AG04450 (cell line): ENCODE measurements at regions of chr5 and their contacts with region 1.

Region 1: DNA sequence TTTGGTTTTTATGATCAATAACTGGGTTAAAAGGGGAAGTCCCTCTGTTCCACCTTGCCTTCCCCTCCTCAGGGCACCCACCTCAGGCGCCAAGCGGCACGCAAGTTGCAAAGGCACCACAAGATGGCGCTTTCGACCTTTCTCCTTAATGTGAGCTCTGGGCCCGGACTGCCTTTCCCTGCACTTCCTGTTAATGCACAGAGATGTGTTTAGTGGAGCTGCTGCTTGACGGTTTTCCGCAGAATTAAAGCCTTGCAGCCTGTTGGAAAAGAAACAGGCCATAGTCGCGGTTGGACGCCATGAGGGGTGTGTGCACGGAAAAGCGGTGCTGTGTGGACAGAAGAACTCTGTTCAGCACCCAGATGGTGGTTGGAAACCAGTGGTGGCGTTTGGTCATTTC is 17.9 kb downstream of the CXCL14 start:
- DNase-seq: peak; percentile 42
- H3K4me3 ChIP-seq: no peak overlapping the region
- H3K27ac ChIP-seq: no peak overlapping the region
- H3K27me3 ChIP-seq: peaks cover 28% of the 10 kb centered on the region
- CTCF ChIP-seq: peak; percentile 89

Region 2: GRCh38 chr5:135116160-135116561 is 444.7 kb before region 1 on chr5:
- CTCF ChIA-PET with region 1: no interaction called
- POLR2A ChIA-PET with region 1: no interaction called
- DNase-seq: no peak
- H3K4me3 ChIP-seq: no peak overlapping the region
- H3K27ac ChIP-seq: no peak overlapping the region
- H3K27me3 ChIP-seq: peaks cover 14% of the 10 kb centered on the region
- CTCF ChIP-seq: no peak

Region 3: DNA sequence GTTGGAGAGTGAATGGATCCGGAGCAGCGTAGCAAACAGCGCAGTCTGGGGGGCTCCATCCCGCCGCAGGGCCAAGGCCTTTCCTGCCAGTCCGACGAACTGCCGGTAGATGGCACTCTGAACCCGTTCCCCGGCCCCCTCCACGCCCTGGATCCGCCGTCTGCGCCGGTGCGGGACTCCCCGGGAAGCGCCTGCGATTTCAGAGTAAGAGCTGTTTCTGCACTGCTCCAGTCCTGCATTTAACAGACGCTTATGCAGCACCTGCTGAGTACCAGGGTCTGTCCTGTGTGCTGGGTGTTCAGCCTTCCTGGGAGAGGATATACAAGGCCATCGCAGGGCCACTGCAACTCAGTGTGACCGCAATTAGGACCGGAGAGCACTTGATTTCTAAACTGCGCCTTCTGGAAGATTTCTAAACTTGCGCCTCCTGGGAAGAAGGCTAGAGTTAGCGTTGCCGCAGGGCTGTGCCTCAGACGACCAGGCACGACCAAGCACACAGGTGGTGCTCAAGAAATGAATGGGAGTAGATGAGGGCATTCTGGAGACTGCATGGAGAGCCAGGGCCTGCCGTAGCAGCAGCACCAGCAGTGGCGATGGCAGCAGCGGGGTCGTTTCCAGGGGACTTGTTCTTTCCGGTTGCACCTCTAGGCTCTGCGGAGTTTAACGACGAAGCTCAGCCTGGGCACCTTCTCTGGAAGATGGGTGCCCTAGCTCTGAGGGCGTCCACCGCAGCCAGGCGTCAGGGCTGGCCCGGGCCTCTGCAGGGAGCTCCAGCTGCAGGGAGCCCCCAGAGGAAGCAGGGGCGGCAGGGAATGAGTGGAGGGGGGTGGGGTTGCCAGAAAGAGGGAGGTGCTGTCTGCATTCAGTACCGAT is 94.4 kb before region 1 on chr5:
- CTCF ChIA-PET with region 1: interaction called, 1,313 read pairs
- POLR2A ChIA-PET with region 1: no interaction called
- DNase-seq: no peak
- H3K4me3 ChIP-seq: peak overlapping the region; percentile 17; the same call in 1 of the 2 replicates
- H3K27ac ChIP-seq: no peak overlapping the region
- H3K27me3 ChIP-seq: peaks cover 58% of the 10 kb centered on the region
- CTCF ChIP-seq: peak; percentile 87

Region 4: DNA sequence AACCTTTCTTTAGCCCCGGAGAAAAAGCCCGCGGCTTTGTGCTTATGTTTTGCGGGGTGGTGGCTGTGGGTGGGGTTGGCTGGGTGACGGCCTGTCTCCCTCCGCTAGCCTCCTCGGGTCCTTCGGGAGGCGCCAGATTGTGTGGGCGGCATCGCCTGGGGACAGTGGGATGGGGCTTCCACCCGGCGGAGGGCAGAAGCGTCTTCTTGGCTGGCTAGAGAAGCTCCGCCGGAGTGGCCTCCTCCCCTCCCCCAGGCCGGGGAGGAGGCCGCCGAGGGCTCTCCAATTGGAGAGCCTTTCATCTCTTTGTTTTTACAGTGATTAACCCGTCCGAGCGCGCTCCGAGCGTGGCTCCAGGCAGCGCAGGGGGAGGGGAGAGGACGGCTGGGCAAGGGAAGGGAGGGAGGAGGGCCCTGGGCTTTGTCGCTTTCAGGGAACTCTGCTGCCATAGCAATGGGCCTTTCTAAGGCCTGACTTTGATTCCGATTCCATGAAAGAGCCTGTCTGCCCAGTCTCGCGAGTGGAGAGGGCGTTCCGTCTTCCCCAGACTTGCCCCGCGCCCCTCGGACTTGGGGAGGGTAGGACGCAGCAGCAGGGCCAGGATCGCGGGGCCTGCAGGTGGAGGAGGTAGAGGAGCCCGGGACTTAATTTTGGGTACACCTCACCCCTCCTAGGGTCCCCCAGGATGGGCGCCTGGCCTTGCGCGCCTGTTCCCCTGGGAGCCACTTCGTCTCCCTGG is 72.0 kb before region 1 on chr5:
- CTCF ChIA-PET with region 1: interaction called, 11 read pairs
- POLR2A ChIA-PET with region 1: interaction called, 4 read pairs
- DNase-seq: peak; percentile 45
- H3K4me3 ChIP-seq: peak overlapping the region; percentile 61
- H3K27ac ChIP-seq: peak overlapping the region; percentile 11
- H3K27me3 ChIP-seq: peaks cover 18% of the 10 kb centered on the region
- CTCF ChIP-seq: no peak

Region 5: DNA sequence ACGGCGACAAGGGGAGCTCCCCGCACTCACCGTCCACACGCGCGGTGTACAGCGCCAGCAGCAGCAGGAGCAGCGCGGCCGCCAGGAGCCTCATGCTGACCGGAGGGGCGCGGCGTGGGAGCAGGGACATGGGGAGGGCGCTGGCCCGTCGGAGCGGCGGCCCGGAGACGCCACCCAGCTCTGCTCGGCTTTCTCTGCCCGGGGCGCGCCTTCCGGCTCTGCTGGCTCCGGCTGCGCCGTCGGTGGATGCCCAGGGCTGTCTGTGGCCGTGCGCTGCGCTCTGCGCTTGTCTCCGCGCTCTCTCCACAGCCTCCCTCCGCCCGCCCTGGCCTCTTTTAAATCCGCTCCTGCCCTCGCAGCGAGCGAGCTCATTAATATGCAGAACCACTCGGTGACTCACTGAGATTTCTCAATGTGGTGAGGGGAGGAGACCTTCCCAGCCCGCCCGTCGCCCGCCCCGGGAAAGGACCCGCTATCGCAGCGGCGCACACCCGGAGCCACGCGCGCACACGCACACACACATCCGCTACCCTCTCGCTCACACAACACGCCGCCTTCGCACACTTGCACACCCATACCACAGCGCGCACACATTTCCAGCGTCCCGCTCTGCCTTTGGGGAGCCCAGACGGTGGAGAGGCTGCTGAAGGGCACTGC is 18.0 kb after region 1 on chr5 and contains the start of gene CXCL14:
- CTCF ChIA-PET with region 1: interaction called, 14 read pairs
- POLR2A ChIA-PET with region 1: no interaction called
- DNase-seq: no peak
- H3K4me3 ChIP-seq: peak within 1 kb of the TSS; percentile 34
- H3K27ac ChIP-seq: no peak within 1 kb of the TSS
- H3K27me3 ChIP-seq: peaks cover 46% of the 10 kb centered on the region
- CTCF ChIP-seq: no peak
- polyA plus RNA-seq, gene CXCL14: not detected in 2 replicates

Region 6: GRCh38 chr5:135729321-135729786 is 168.5 kb after region 1 on chr5:
- CTCF ChIA-PET with region 1: interaction called, 14 read pairs
- POLR2A ChIA-PET with region 1: no interaction called
- DNase-seq: no peak
- H3K4me3 ChIP-seq: no peak overlapping the region
- H3K27ac ChIP-seq: no peak overlapping the region
- H3K27me3 ChIP-seq: peaks cover 3% of the 10 kb centered on the region
- CTCF ChIP-seq: peak; percentile 15; the same call in 1 of the 2 replicates

Region 7: DNA sequence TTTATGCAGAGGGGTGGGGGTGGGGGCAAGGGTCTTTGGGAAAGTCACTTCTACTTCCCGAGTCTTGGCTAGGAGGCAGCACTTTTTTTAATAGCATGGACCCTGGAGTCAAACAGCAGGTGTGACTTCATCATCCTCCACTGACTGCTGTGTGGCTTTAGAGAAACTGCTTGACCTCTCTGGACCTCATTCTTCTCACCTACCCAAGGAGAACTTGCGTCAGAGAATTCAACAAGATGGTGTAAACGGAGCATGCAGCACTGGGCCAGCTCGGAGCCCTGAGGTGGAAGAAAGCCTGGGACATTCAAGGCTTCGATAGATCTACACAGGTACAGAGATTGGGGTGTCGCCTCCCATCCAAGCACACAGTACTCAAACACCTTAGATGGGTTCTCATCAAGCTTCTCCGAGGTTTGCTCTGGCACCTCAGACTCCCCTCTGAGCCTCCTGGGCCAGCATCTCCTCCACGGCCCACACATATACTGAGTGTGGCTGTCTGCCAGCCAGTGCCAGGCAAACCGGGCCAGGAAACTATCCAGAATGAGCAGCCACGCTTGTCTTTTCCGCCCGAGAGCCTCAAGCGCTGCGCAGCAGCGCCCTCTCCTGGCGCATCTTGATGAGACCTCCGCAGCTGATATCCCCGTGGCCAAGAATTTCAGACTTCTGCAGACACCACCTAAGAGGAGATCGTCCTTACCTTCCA is 269.0 kb after region 1 on chr5:
- CTCF ChIA-PET with region 1: interaction called, 112 read pairs
- POLR2A ChIA-PET with region 1: no interaction called
- DNase-seq: no peak
- H3K4me3 ChIP-seq: no peak overlapping the region
- H3K27ac ChIP-seq: no peak overlapping the region
- H3K27me3 ChIP-seq: peaks cover 16% of the 10 kb centered on the region
- CTCF ChIP-seq: peak; percentile 84